ENCODE measurements at regions of chr11 and their contacts with region 1.

Region 1: GRCh38 chr11:85664615-85665481 is at the start of gene CREBZF:
- DNase-seq: peak; percentile 88 to 96 (median 94)
- H3K4me3 ChIP-seq: peak within 1 kb of the TSS; percentile 69 to 97 (median 87)
- H3K27ac ChIP-seq: peak within 1 kb of the TSS; percentile 87 to 99 (median 97)
- H3K27me3 ChIP-seq: no peaks in the 10 kb centered on the region
- CTCF ChIP-seq: peak in 41 of 56 donors; percentile 10 to 63 (median 32)
- total RNA-seq, gene CREBZF: 41.8 to 87.2 (median 58.4) TPM

Region 2: GRCh38 chr11:85627998-85628770 is 36.7 kb before region 1 on chr11 and contains the start of gene TMEM126B:
- intact Hi-C with region 1: loop called (anchors 1 kb)
- DNase-seq: peak; percentile 97 to 99 (median 99)
- H3K4me3 ChIP-seq: peak within 1 kb of the TSS; percentile 52 to 94 (median 81)
- H3K27ac ChIP-seq: peak within 1 kb of the TSS; percentile 84 to 99 (median 96)
- H3K27me3 ChIP-seq: no peaks in the 10 kb centered on the region
- CTCF ChIP-seq: peak in 27 of 56 donors; percentile 3 to 56 (median 20)
- total RNA-seq, gene TMEM126B: 33.6 to 78.5 (median 56.3) TPM

Region 3: DNA sequence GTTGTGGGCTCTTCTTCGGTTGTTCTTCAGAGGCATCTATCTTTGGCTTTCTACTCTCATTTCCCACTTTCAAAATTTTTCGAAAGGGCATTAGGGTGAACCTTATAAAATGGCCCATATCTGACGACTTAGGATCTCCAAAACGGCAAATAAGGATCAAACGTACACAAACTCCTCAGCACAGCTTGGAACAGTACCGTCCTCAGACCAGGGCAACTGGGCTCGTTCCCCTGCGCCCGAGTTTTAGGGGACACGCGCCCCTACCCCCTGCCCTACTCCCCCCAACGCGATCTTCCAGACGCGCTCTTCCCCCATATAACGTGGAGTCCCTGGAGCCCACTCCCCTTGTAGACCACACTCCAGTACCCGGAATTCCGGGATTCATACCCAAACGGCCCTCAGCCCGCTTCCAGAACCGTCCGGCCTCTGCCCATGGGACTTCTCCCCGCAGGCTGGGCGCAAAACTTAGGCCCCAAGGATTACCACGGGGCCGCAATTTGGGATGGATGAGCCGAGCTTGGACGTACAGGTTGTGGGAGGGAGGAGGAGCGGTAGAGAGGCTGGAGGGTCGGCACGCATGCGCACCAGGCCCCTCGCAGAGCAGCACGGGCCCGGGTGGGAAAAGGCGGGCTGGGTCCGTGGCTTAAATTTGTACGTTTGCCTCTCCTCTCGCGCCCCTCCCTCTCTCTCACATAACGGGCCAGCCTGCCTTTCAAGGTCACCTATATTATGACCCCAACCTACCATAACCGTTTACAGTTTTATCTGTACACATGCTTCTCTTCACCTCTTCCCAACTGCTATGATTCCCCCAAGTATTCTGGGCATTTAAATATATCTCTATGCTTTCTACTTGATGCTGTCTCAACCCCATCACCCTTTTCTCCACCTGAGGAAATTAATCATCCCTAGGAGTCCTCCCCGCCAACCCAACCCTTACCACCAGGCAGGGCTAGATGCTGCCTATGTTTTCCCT is 17.8 kb after region 1 on chr11:
- intact Hi-C with region 1: loop called in 1 of 2 experiments (anchors 2 kb)
- DNase-seq: peak; percentile 60 to 79 (median 63)
- H3K4me3 ChIP-seq: peak overlapping the region; percentile 43 to 78 (median 65)
- H3K27ac ChIP-seq: peak overlapping the region in 29 of 59 donors; percentile 7 to 87 (median 49)
- H3K27me3 ChIP-seq: no peaks in the 10 kb centered on the region
- CTCF ChIP-seq: no peak

Region 4: GRCh38 chr11:86302100-86302793 is 637.4 kb after region 1 on chr11 and contains the start of gene HIKESHI:
- intact Hi-C with region 1: loop called in 1 of 2 experiments (anchors 10 kb)
- DNase-seq: peak; percentile 99 to 100 (median 100)
- H3K4me3 ChIP-seq: peak within 1 kb of the TSS; percentile 68 to 99 (median 88)
- H3K27ac ChIP-seq: peak within 1 kb of the TSS; percentile 35 to 95 (median 86)
- H3K27me3 ChIP-seq: no peaks in the 10 kb centered on the region
- CTCF ChIP-seq: peak in 41 of 56 donors; percentile 5 to 58 (median 31)
- total RNA-seq, gene HIKESHI: 25.0 to 47.8 (median 34.2) TPM

Measured in dorsolateral prefrontal cortex (tissue), 120 donors.